ENCODE measurements at regions of chr12 and their contacts with region 1.

Region 1: DNA sequence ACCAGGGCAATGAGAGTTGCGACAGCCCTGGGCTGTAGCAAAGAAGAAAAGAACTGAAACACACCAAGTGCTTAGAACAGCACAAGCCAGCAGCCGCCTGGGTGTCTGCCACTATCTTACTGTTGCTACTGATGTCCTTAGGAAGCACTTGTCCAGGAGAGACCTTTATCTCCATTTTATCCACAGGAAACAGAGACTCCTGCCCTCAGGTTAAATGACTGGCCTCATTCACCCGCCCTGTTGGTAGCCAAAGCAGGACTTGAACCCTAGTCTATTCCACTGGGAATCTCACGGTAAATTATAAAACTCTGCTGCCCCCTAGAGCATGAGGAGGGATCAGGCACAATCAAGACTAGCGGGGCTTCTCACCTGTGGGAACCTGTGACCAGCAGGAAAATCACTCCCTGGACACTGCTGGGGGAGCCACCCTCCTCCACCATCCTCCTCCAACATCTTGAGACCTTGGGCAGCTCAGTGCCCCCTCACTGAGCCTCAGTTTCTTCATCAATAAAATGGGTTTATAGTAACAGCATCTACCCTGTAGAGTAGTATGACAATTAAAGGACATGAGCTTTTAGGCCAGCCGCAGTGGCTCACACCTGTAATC is 20.5 kb upstream of the TESC start:
- ATAC-seq: peak in 3 of 8 experiments; percentile 84 to 89 (median 85)
- H3K4me3 ChIP-seq: no peak overlapping the region
- H3K27ac ChIP-seq: no peak overlapping the region
- H3K4me1 ChIP-seq: peaks cover 9 to 15% of the 10 kb centered on the region in 2 donors

Region 2: GRCh38 chr12:117037289-117038022 is 82.2 kb before region 1 on chr12:
- in situ Hi-C with region 1: loop called in 1 of 9 experiments (anchors 5 kb)
- ATAC-seq: no peak
- H3K4me3 ChIP-seq: no peak overlapping the region
- H3K27ac ChIP-seq: no peak overlapping the region
- H3K4me1 ChIP-seq: peaks cover 21 to 23% of the 10 kb centered on the region in 2 donors

Measured in motor neuron (in vitro differentiated cells).